Caco-2 (cell line): ENCODE measurements at regions of chr2 and their contacts with region 1.

Region 1: DNA sequence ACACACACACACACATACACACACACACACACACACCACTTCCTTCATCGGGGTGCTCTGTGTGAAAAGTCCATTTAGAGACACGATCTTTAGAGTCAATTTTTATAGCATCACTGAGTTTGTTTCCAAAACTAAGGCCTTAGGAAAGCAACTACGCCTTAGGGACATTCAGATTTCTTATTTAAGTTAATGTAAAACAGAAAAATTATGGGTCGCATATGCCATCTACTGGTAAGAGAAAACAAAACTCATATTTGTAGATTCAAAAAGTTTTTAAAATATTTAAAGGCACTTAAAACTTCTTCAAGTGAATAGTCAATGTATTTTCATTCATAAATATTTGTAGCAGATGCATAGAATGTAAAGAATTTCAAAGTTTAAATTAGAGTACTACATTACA is 166.2 kb downstream of the ATAD2B start:
- DNase-seq: peak in 1 of 2 experiments; percentile 4
- H3K4me3 ChIP-seq: no peak overlapping the region
- H3K4me3 Mint-ChIP-seq: no peak overlapping the region
- H3K27ac Mint-ChIP-seq: no peak overlapping the region
- H3K4me1 ChIP-seq: peaks cover 14% of the 10 kb centered on the region
- H3K4me1 Mint-ChIP-seq: peaks cover 9% of the 10 kb centered on the region
- H3K27me3 ChIP-seq: no peaks in the 10 kb centered on the region
- H3K27me3 Mint-ChIP-seq: no peaks in the 10 kb centered on the region
- CTCF ChIP-seq: peak; percentile 11 to 14

Region 2: DNA sequence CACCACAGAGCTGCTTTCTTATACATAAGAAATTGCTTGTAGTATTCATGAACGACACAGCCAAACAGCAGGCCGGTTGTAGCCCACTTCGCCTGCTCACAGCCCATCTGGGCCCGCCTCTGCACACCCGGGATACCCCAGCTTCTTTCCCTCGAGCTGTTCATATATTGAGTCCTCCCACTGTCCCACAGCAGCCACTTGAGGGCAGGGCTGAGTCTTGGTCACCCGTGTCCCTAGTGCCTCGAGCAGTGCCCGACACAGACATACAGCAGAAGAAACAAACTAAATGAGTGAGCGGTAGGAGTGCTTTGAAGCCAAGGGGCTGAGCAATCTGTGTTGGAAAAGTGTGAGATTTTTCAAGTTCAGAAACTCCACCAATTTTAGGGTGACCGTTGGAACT is 124.3 kb before region 1 on chr2:
- CTCF ChIA-PET with region 1: no interaction called
- POLR2A ChIA-PET with region 1: no interaction called
- intact Hi-C with region 1: loop called (anchors 5 kb)
- DNase-seq: peak; percentile 27 to 52
- H3K4me3 ChIP-seq: no peak overlapping the region
- H3K4me3 Mint-ChIP-seq: no peak overlapping the region
- H3K27ac Mint-ChIP-seq: no peak overlapping the region
- H3K4me1 ChIP-seq: no peaks in the 10 kb centered on the region
- H3K4me1 Mint-ChIP-seq: no peaks in the 10 kb centered on the region
- H3K27me3 ChIP-seq: no peaks in the 10 kb centered on the region
- H3K27me3 Mint-ChIP-seq: no peaks in the 10 kb centered on the region
- CTCF ChIP-seq: peak in 1 of 2 experiments; percentile 24

Region 3: GRCh38 chr2:24045511-24046508 is 285.1 kb after region 1 on chr2:
- CTCF ChIA-PET with region 1: no interaction called
- POLR2A ChIA-PET with region 1: no interaction called
- intact Hi-C with region 1: no loop called
- DNase-seq: no peak
- H3K4me3 ChIP-seq: peak overlapping the region; percentile 65
- H3K4me3 Mint-ChIP-seq: peak overlapping the region; percentile 86
- H3K27ac Mint-ChIP-seq: no peak overlapping the region
- H3K4me1 ChIP-seq: peaks cover 4% of the 10 kb centered on the region; the same call in 1 of the 2 replicates
- H3K4me1 Mint-ChIP-seq: peaks cover 7% of the 10 kb centered on the region
- H3K27me3 ChIP-seq: no peaks in the 10 kb centered on the region
- H3K27me3 Mint-ChIP-seq: no peaks in the 10 kb centered on the region
- CTCF ChIP-seq: no peak